Activated T-helper 2 cell treated with anti-CD3 and anti-CD28 coated beads, Interferon-gamma antibody, Interleukin-2, Interleukin-4, amounts not matched to agents 10 μg/mL and 5 μg/mL and 100 μg/mL, durations not matched to agents 14 hours and 24 hours and 36 hours (primary cell): ENCODE measurements at regions of chr14 and their contacts with region 1.

Region 1: GRCh38 chr14:92651106-92651757 is 97.2 kb downstream of the LGMN start:
- DNase-seq: peak; percentile 76
- H3K4me3 Mint-ChIP-seq: peak overlapping the region; percentile 91
- H3K27ac Mint-ChIP-seq: peak overlapping the region; percentile 95
- H3K4me1 Mint-ChIP-seq: peaks cover 76% of the 10 kb centered on the region
- H3K27me3 Mint-ChIP-seq: no peaks in the 10 kb centered on the region

Region 2: GRCh38 chr14:92556255-92556741 is 94.9 kb before region 1 on chr14:
- intact Hi-C with region 1: loop called (anchors 1 kb)
- DNase-seq: no peak
- H3K4me3 Mint-ChIP-seq: no peak overlapping the region
- H3K27ac Mint-ChIP-seq: peak overlapping the region; percentile 74
- H3K4me1 Mint-ChIP-seq: peaks cover 51% of the 10 kb centered on the region
- H3K27me3 Mint-ChIP-seq: peaks cover 45% of the 10 kb centered on the region

Region 3: DNA sequence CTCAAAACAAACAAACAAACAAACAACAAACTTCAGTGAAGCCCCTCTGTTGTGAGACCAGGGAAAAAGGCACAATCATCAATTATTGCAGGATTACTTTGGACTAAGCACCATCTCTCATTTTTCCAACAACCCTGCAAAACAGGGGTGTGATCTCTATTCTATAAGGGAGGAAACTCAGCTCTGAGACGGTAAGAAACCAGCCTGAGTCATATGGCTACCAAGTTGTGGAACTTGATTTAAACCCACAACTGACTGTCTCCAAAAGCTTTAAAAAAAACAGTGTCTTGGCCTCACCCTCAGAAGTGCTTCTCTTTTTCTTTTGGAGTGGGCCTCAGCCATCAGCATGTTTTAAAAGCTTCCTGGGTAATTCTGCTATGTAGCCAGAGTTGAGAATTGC is 87.9 kb before region 1 on chr14:
- intact Hi-C with region 1: loop called (anchors 1 kb)
- DNase-seq: no peak
- H3K4me3 Mint-ChIP-seq: no peak overlapping the region
- H3K27ac Mint-ChIP-seq: no peak overlapping the region
- H3K4me1 Mint-ChIP-seq: peaks cover 42% of the 10 kb centered on the region
- H3K27me3 Mint-ChIP-seq: peaks cover 39% of the 10 kb centered on the region

Region 4: DNA sequence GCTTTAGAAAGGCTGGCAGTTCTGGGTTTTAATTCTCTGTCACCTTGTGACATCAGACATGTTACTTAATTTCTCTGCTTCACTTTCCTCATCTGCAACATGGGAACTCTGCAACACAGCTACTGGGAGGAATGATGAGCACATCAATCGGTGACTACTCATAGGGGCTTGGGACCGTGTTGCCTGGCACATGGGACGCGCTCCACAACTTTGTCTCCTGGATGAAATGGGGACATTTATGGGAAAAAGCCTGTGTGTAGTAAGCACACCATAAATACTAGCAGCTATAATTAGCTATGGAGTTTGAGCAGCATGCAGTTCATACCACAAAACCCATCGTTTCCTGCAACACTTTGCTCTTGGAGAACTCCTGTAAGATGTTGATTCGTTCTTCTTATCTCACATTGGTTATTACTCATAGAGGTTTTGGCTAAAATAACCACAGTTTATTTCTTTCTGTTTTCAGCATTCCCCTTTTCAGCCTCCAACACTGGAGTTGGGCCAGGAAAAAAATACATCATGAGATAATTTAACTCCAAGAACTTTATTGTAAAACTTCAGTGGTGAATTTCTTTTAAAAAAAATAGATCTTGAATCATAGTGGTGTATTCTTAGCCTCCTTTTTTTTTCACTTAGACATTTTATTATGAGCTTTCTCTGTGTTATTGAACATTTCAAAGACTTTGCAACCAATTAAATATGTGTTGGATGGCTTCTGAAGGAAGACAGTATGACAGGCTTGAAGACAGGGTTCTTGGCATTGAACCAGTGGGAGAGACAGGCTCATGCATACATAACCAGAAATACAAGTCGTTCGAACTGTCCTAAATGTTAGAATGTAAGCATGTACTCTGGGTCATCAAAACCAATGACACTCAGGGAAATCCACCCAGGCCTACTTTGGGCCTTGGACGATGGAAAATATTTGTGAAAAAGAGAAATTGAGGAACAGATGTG is 65.0 kb before region 1 on chr14:
- intact Hi-C with region 1: loop called (anchors 1 kb)
- DNase-seq: peak; percentile 44
- H3K4me3 Mint-ChIP-seq: peak overlapping the region; percentile 49
- H3K27ac Mint-ChIP-seq: peak overlapping the region; percentile 65
- H3K4me1 Mint-ChIP-seq: peaks cover 63% of the 10 kb centered on the region
- H3K27me3 Mint-ChIP-seq: peaks cover 43% of the 10 kb centered on the region

Region 5: GRCh38 chr14:92615451-92615850 is 35.8 kb before region 1 on chr14:
- intact Hi-C with region 1: loop called (anchors 2 kb)
- DNase-seq: peak; percentile 75
- H3K4me3 Mint-ChIP-seq: no peak overlapping the region
- H3K27ac Mint-ChIP-seq: no peak overlapping the region
- H3K4me1 Mint-ChIP-seq: peaks cover 28% of the 10 kb centered on the region
- H3K27me3 Mint-ChIP-seq: no peaks in the 10 kb centered on the region

Region 6: GRCh38 chr14:92668276-92668973 is 17.2 kb after region 1 on chr14:
- intact Hi-C with region 1: loop called (anchors 1 kb)
- DNase-seq: no peak
- H3K4me3 Mint-ChIP-seq: no peak overlapping the region
- H3K27ac Mint-ChIP-seq: peak overlapping the region; percentile 50
- H3K4me1 Mint-ChIP-seq: peaks cover 36% of the 10 kb centered on the region
- H3K27me3 Mint-ChIP-seq: no peaks in the 10 kb centered on the region